Naive thymus-derived CD4-positive, alpha-beta T cell (primary cell): ENCODE measurements at regions of chr4 and their contacts with region 1.

Region 1: GRCh38 chr4:77240469-77241066 is 83.6 kb downstream of the CCNG2 start:
- DNase-seq: peak in 8 of 9 donors; percentile 11 to 59 (median 30)
- ATAC-seq: peak; percentile 47
- H3K4me3 ChIP-seq: no peak overlapping the region
- H3K4me3 Mint-ChIP-seq: no peak overlapping the region
- H3K27ac ChIP-seq: no peak overlapping the region
- H3K27ac Mint-ChIP-seq: peak overlapping the region in 1 of 9 donors; percentile 10
- H3K4me1 ChIP-seq: no peaks in the 10 kb centered on the region
- H3K4me1 Mint-ChIP-seq: no peaks in the 10 kb centered on the region
- H3K27me3 ChIP-seq: no peaks in the 10 kb centered on the region
- H3K27me3 Mint-ChIP-seq: peaks cover 3 to 12% (median 6%) of the 10 kb centered on the region in 5 donors

Region 2: DNA sequence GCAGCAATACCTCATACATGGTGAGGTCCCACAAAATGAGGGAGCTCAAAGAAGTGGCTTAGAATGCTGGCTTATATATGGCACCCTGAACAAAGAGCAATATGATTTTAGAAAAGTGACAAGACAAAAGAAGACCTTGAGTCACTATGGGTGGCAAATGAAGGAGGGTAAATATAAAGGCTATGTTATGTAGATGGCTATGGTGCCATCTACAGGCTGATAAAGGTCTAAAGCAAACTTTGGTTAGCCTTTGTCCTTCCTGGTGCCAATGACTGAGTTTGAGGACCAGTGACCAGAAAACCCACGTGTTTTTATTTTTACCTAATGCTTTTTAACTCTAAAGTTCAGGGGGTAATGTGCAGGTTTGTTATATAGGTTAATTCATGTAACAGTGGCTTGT is 68.3 kb after region 1 on chr4:
- CTCF ChIA-PET with region 1: no interaction called
- POLR2A ChIA-PET with region 1: no interaction called
- intact Hi-C with region 1: loop called in 1 of 2 experiments (anchors 1 kb)
- DNase-seq: peak in 1 of 9 donors; percentile 28
- ATAC-seq: peak; percentile 41
- H3K4me3 ChIP-seq: no peak overlapping the region
- H3K4me3 Mint-ChIP-seq: no peak overlapping the region
- H3K27ac ChIP-seq: no peak overlapping the region
- H3K27ac Mint-ChIP-seq: no peak overlapping the region
- H3K4me1 ChIP-seq: no peaks in the 10 kb centered on the region
- H3K4me1 Mint-ChIP-seq: no peaks in the 10 kb centered on the region
- H3K27me3 ChIP-seq: peaks cover 0 to 3% of the 10 kb centered on the region in 2 donors
- H3K27me3 Mint-ChIP-seq: peaks cover 0 to 10% (median 4%) of the 10 kb centered on the region in 5 donors

Region 3: DNA sequence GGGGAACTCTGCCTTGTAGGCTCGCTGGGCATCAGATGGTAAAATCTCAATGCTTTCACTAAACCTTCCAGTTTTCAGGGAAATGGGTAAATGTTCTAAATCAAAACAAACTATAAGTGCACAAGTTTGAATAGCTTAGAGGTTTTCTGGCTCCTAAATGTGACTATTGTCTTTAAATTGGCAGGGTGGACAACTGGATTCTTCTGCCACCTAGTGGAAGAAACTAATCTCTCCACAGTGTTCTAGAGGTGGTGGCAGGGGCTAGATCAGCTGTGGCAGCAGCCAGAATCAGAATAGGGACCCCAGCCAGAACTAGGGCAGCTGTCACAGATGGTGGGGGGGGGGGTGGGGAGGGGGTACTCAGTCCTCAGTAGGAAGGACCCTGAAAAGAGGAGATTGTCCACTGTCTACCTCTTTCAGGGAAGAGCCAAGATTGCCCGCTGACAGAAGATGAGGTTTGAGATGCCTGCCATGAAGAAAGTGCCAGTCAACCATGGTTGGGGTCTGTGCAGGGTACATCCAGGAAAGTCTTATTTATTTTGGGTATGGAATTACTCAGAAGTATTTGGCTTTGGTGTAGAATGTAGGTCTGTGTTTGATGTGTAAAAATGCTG is 117.9 kb after region 1 on chr4:
- CTCF ChIA-PET with region 1: no interaction called
- POLR2A ChIA-PET with region 1: no interaction called
- intact Hi-C with region 1: loop called (anchors 1 kb)
- DNase-seq: peak in 4 of 9 donors; percentile 2 to 25 (median 16)
- ATAC-seq: no peak
- H3K4me3 ChIP-seq: no peak overlapping the region
- H3K4me3 Mint-ChIP-seq: no peak overlapping the region
- H3K27ac ChIP-seq: no peak overlapping the region
- H3K27ac Mint-ChIP-seq: no peak overlapping the region
- H3K4me1 ChIP-seq: no peaks in the 10 kb centered on the region
- H3K4me1 Mint-ChIP-seq: no peaks in the 10 kb centered on the region
- H3K27me3 ChIP-seq: no peaks in the 10 kb centered on the region
- H3K27me3 Mint-ChIP-seq: peaks cover 0 to 10% (median 0%) of the 10 kb centered on the region in 5 donors